ENCODE measurements at regions of chr14 and their contacts with region 1.

Region 1: GRCh38 chr14:78653173-78653572 is 483.0 kb downstream of the NRXN3 start:
- DNase-seq: no peak
- H3K4me3 ChIP-seq: no peak overlapping the region
- H3K27ac ChIP-seq: no peak overlapping the region
- H3K4me1 ChIP-seq: no peaks in the 10 kb centered on the region
- H3K27me3 ChIP-seq: no peaks in the 10 kb centered on the region
- CTCF ChIP-seq: no peak
- EP300 ChIP-seq: no peak
- POLR2A ChIP-seq: no peak

Region 2: DNA sequence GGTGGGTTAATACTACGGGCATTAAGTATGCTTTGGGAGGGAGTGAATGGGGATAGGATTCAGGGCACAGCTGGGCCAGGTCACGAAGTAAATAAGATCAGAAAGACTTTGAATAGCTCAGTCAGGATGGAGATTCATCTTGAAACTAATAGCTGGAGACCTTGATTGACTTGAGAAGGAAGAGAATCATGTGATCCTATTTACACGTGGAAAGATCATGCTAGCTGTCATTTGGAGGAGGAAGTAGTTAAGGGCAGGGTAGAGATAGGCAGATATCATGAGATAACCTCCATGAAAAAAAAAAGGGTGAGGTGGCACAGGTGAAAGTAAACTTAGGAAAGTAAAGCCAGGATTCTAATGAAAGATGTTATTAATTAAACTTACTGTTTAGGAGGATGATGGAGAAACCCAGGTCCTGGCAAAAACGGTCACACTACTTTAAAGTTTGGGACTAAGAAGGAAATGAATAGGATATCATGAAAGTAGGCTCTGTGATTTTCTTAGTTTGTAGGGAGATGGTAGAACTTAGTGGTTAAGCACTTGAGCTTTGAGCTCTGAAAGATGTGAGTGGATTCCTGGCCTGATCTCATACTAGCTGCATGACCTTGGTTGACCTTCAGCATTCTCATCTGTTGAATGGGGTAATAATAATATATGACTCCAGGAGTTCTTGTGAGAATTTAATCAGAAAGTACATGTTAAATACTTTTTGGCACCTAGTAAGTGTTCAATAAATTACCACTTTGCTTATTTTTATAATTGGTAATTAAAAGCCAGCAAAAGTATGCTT is 44.0 kb before region 1 on chr14:
- intact Hi-C with region 1: loop called in 1 of 4 experiments (anchors 2 kb)
- DNase-seq: no peak
- H3K4me3 ChIP-seq: no peak overlapping the region
- H3K27ac ChIP-seq: no peak overlapping the region
- H3K4me1 ChIP-seq: no peaks in the 10 kb centered on the region
- H3K27me3 ChIP-seq: no peaks in the 10 kb centered on the region
- CTCF ChIP-seq: no peak
- EP300 ChIP-seq: no peak
- POLR2A ChIP-seq: no peak

Measured in ovary (tissue), 10 donors.